Ascending aorta (tissue), 2 donors: ENCODE measurements at regions of chr5 and their contacts with region 1.

Region 1: GRCh38 chr5:127030259-127031146 is at the start of gene MARCHF3:
- DNase-seq: peak; percentile 85 to 97
- H3K4me3 ChIP-seq: peak within 1 kb of the TSS; percentile 80
- H3K27ac ChIP-seq: peak within 1 kb of the TSS; percentile 90 to 94
- H3K4me1 ChIP-seq: peaks cover 0 to 9% of the 10 kb centered on the region in 2 donors
- H3K27me3 ChIP-seq: no peaks in the 10 kb centered on the region
- CTCF ChIP-seq: peak in 1 of 3 experiments; percentile 18
- total RNA-seq, gene MARCHF3: 22.6 TPM

Region 2: GRCh38 chr5:126676195-126676624 is 354.3 kb before region 1 on chr5:
- intact Hi-C with region 1: loop called (anchors 10 kb)
- DNase-seq: peak in 1 of 2 donors; percentile 67
- H3K4me3 ChIP-seq: no peak overlapping the region
- H3K27ac ChIP-seq: no peak overlapping the region
- H3K4me1 ChIP-seq: no peaks in the 10 kb centered on the region
- H3K27me3 ChIP-seq: no peaks in the 10 kb centered on the region
- CTCF ChIP-seq: peak; percentile 61 to 78 (median 63)

Region 3: DNA sequence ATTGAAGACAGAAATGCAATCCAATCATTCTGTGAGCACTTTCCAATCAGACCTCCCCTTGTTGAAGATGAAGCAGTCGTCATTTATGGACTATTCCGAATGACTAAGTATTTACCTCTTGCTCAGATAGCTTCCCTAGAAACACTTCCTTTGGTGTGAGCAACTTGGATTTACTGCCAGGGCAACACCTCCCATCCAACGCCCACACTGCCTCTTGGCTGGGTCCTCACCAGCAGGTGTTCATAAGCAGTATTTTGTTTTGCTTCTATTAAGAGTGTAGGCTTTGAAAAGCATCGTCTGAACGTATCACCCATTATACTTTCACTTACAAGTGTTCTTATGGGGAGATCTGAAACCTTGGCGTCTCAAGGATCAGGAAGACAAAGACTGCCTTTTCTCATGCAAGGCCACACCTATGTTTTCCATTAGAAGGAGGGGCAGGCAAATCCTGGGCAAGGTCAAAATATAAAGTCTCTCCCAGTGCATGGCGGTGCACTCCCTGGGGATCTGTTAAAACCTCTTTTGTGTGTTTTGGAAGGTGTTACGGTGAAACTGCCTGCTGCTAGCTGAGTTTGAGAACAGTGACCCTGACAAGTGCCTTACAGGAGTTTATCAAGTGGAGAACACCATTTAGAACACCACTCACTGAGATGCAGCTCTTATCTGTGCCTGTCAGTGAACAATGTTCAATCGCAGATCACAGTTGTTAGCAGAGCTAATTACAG is 10.5 kb after region 1 on chr5:
- intact Hi-C with region 1: loop called (anchors 1 kb)
- DNase-seq: no peak
- H3K4me3 ChIP-seq: no peak overlapping the region
- H3K27ac ChIP-seq: peak overlapping the region; percentile 60 to 75
- H3K4me1 ChIP-seq: peaks cover 0 to 16% of the 10 kb centered on the region in 2 donors
- H3K27me3 ChIP-seq: no peaks in the 10 kb centered on the region
- CTCF ChIP-seq: no peak

Region 4: DNA sequence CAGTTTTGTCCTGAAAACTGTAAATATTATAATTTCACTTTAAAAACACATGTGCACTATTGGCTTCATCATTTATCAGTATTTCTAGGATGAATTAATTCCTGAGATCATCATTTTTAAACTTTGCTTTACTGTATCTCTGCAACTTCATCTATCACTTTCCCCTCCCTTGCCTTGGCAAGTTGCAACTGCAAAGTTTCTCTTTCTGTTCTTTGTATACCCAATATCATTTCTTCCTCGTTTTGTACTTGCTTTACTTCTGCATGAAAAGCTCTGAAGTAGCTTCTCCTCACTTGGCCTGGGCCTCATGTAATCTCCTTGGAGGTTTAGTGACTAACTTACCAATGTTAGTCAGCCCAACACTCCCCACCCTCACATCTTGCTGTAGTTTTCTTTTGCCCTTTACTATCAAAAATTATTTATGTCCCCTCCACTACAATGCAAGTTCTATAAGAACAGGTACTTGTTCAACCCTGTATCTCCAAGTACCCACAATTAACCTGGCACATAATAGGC is 30.0 kb after region 1 on chr5:
- intact Hi-C with region 1: no loop called
- DNase-seq: no peak
- H3K4me3 ChIP-seq: no peak overlapping the region
- H3K27ac ChIP-seq: no peak overlapping the region
- H3K4me1 ChIP-seq: no peaks in the 10 kb centered on the region
- H3K27me3 ChIP-seq: no peaks in the 10 kb centered on the region
- CTCF ChIP-seq: no peak

Region 5: DNA sequence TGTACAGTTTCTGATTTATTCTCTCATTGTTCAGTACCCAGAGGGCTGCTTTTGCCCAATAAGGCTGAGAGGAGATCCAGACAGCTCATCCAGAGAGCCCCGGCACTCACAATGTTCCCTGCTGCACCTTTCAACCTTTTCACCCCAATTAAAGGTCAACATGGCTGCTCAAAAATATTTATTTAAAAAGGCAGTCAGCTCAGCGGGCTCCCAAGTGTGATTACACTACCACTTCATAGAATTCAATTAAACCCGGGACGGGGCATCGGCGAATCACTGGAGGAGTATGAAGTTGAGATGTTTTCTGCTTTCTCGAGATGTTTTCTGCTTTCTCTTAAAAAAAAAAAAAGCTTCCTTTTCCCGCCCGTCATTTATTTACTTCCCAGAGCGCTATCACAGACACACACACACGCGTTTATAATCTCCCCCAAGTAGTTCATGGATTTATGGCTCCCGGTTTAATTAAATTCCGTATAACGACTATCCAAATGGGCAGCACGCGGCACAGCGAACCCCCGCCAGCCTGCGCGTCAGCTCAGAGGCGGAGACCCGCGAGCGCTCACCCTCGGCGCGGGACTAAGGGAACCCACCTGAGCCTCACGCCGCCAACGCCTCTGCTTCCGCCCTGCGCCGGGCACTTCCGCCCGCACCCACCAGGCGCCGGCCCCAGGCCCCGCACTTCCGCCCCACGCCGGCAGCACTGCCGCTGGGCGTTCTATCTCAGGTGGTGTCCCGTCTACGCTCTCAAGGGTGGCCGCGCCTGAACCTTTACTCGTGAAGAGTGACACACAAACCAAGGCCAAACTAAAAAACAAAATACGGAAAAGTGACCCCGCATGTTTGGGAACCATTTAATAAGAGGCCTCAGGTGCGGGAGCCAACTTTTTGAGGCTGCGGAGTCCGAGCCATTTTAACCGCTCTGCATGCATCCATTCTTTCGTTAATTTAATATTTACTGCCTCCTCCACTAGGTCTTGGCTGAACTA is 42.7 kb after region 1 on chr5 and contains the start of gene C5orf63:
- intact Hi-C with region 1: loop called (anchors 5 kb)
- DNase-seq: no peak
- H3K4me3 ChIP-seq: peak within 1 kb of the TSS; percentile 67 to 68
- H3K27ac ChIP-seq: no peak within 1 kb of the TSS
- H3K4me1 ChIP-seq: no peaks in the 10 kb centered on the region
- H3K27me3 ChIP-seq: no peaks in the 10 kb centered on the region
- CTCF ChIP-seq: no peak
- total RNA-seq, gene C5orf63: not detected